ENCODE measurements at regions of chr19 and their contacts with region 1.

Region 1: DNA sequence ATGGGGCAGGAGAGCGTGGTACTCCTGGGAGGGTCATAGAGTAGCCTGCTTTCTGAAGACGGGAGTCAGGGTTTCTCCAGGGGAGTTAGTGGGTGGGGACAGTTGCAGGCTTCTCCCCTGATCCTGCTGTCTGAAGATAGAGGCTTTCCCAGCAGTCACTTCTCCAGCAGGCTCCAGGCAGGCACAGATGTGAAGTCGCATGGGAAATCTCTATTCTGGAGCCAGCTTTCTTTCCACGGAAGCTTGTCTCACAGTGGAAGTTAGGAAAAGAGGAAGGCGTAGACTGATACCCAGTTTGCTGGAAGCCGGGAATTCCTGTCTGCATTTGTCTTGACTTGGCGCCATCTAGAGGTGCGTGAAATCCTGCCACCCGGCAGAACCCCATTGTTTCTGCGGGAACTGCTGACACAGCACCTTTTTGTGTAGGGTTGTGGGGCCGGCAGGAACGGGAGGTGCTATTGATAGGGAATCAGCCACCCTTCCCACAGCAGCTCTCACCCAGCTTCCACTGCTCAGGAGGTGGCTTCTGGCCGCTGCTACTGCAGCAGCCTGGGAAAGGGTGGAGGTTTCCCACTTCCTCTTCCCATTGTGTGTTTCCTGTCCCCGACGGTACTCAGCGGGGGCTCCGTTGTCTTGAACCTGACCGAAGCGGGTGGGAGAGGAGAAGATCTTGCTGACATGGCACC is 28.5 kb upstream of the NPAS1 start:
- DNase-seq: peak in 8 of 9 experiments; percentile 37 to 80 (median 65)
- ATAC-seq: peak; percentile 73
- H3K4me3 ChIP-seq: no peak overlapping the region
- H3K4me3 Mint-ChIP-seq: no peak overlapping the region
- H3K27ac ChIP-seq: no peak overlapping the region
- H3K27ac Mint-ChIP-seq: no peak overlapping the region
- H3K4me1 ChIP-seq: peaks cover 10% of the 10 kb centered on the region
- H3K4me1 Mint-ChIP-seq: peaks cover 17% of the 10 kb centered on the region
- H3K27me3 ChIP-seq: no peaks in the 10 kb centered on the region
- H3K27me3 Mint-ChIP-seq: no peaks in the 10 kb centered on the region
- CTCF ChIP-seq: peak; percentile 63

Region 2: GRCh38 chr19:46932346-46932745 is 58.8 kb before region 1 on chr19:
- CTCF ChIA-PET with region 1: interaction called, 8 read pairs
- POLR2A ChIA-PET with region 1: no interaction called
- intact Hi-C with region 1: loop called in 1 of 2 experiments (anchors 5 kb)
- DNase-seq: no peak
- ATAC-seq: no peak
- H3K4me3 ChIP-seq: no peak overlapping the region
- H3K4me3 Mint-ChIP-seq: no peak overlapping the region
- H3K27ac ChIP-seq: no peak overlapping the region
- H3K27ac Mint-ChIP-seq: peak overlapping the region; percentile 80
- H3K4me1 ChIP-seq: peaks cover 34% of the 10 kb centered on the region
- H3K4me1 Mint-ChIP-seq: peaks cover 68% of the 10 kb centered on the region
- H3K27me3 ChIP-seq: no peaks in the 10 kb centered on the region
- H3K27me3 Mint-ChIP-seq: no peaks in the 10 kb centered on the region
- CTCF ChIP-seq: no peak

Region 3: GRCh38 chr19:46944918-46945628 is 46.1 kb before region 1 on chr19:
- CTCF ChIA-PET with region 1: interaction called, 16 read pairs
- POLR2A ChIA-PET with region 1: no interaction called
- intact Hi-C with region 1: no loop called
- DNase-seq: peak in 1 of 9 experiments; percentile 15
- ATAC-seq: no peak
- H3K4me3 ChIP-seq: no peak overlapping the region
- H3K4me3 Mint-ChIP-seq: no peak overlapping the region
- H3K27ac ChIP-seq: no peak overlapping the region
- H3K27ac Mint-ChIP-seq: no peak overlapping the region
- H3K4me1 ChIP-seq: no peaks in the 10 kb centered on the region
- H3K4me1 Mint-ChIP-seq: peaks cover 36% of the 10 kb centered on the region
- H3K27me3 ChIP-seq: no peaks in the 10 kb centered on the region
- H3K27me3 Mint-ChIP-seq: no peaks in the 10 kb centered on the region
- CTCF ChIP-seq: no peak

Region 4: GRCh38 chr19:46975925-46976782 is 15.0 kb before region 1 on chr19:
- CTCF ChIA-PET with region 1: interaction called, 30 read pairs
- POLR2A ChIA-PET with region 1: interaction called, 5 read pairs
- intact Hi-C with region 1: no loop called
- DNase-seq: no peak
- ATAC-seq: no peak
- H3K4me3 ChIP-seq: no peak overlapping the region
- H3K4me3 Mint-ChIP-seq: no peak overlapping the region
- H3K27ac ChIP-seq: no peak overlapping the region
- H3K27ac Mint-ChIP-seq: no peak overlapping the region
- H3K4me1 ChIP-seq: peaks cover 25% of the 10 kb centered on the region
- H3K4me1 Mint-ChIP-seq: peaks cover 41% of the 10 kb centered on the region
- H3K27me3 ChIP-seq: no peaks in the 10 kb centered on the region
- H3K27me3 Mint-ChIP-seq: no peaks in the 10 kb centered on the region
- CTCF ChIP-seq: no peak

Region 5: DNA sequence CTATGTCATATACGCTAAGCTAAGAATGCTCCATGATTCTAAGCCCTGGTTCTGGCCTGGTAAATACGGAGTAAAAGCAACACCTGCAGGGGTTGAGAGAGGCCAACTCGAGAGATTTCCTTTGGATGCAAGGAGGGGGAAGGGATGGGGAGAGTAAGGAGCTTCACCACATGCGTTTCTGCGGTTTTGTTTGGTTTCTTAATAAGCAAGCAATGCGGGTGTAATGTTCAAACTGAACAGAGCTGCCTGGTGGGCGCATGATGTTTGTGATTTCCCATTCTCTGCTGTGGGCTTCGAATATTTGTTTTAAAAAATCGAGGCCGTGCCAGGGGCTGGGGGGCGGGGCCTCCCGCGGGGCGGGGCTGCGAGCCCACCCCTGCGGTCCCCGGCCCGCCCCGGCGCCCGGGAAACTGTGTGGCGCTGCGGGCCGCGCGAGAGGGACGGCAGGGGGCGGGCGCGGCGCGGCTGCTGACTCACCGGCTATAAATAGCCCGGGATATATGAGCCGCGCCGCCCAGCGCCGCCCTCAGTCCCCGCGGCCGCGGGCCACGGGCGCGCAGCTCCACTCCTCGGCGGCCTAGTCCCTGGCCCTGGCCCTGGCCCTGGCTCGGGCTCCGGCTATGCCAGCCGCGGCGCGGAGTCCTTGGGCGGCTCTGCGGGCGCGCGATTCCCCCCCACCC is 234.8 kb after region 1 on chr19:
- CTCF ChIA-PET with region 1: no interaction called
- POLR2A ChIA-PET with region 1: no interaction called
- intact Hi-C with region 1: no loop called
- DNase-seq: peak; percentile 80 to 95 (median 86)
- ATAC-seq: peak; percentile 47
- H3K4me3 ChIP-seq: peak overlapping the region; percentile 48 to 68
- H3K4me3 Mint-ChIP-seq: peak overlapping the region; percentile 81
- H3K27ac ChIP-seq: peak overlapping the region; percentile 73 to 89
- H3K27ac Mint-ChIP-seq: peak overlapping the region; percentile 92
- H3K4me1 ChIP-seq: peaks cover 40% of the 10 kb centered on the region
- H3K4me1 Mint-ChIP-seq: peaks cover 16% of the 10 kb centered on the region
- H3K27me3 ChIP-seq: no peaks in the 10 kb centered on the region
- H3K27me3 Mint-ChIP-seq: no peaks in the 10 kb centered on the region
- CTCF ChIP-seq: peak; percentile 51

Region 6: DNA sequence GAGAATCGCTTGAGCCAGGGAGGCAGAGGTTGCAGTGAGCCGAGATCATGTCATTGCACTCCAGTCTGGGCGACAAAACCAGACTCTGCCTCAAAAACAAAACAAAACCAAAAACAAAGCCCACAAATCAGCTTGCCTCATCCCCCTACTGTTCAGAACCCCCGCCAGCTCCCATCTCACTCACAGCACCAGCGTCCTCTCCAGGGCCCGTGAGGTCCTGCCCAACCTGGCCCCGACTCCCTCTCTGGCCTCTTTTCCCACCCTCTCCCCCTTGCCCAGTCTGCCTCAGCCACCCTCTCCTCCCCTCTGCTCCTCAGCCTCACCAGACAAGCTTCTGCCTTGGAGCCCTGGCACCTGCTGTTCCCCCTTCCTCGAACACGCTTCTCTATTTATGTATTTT is 476.8 kb after region 1 on chr19:
- CTCF ChIA-PET with region 1: no interaction called
- POLR2A ChIA-PET with region 1: no interaction called
- intact Hi-C with region 1: no loop called
- DNase-seq: no peak
- ATAC-seq: no peak
- H3K4me3 ChIP-seq: no peak overlapping the region
- H3K4me3 Mint-ChIP-seq: no peak overlapping the region
- H3K27ac ChIP-seq: no peak overlapping the region
- H3K27ac Mint-ChIP-seq: no peak overlapping the region
- H3K4me1 ChIP-seq: peaks cover 6% of the 10 kb centered on the region
- H3K4me1 Mint-ChIP-seq: peaks cover 9% of the 10 kb centered on the region
- H3K27me3 ChIP-seq: peaks cover 26 to 48% of the 10 kb centered on the region in 2 experiments
- H3K27me3 Mint-ChIP-seq: peaks cover 49% of the 10 kb centered on the region
- CTCF ChIP-seq: no peak